Left cardiac atrium (tissue), 4 donors: ENCODE measurements at regions of chr15 and their contacts with region 1.

Region 1: GRCh38 chr15:81286621-81287121 is 37.3 kb downstream of the STARD5 start:
- DNase-seq: no peak
- ATAC-seq: peak; percentile 34

Region 2: DNA sequence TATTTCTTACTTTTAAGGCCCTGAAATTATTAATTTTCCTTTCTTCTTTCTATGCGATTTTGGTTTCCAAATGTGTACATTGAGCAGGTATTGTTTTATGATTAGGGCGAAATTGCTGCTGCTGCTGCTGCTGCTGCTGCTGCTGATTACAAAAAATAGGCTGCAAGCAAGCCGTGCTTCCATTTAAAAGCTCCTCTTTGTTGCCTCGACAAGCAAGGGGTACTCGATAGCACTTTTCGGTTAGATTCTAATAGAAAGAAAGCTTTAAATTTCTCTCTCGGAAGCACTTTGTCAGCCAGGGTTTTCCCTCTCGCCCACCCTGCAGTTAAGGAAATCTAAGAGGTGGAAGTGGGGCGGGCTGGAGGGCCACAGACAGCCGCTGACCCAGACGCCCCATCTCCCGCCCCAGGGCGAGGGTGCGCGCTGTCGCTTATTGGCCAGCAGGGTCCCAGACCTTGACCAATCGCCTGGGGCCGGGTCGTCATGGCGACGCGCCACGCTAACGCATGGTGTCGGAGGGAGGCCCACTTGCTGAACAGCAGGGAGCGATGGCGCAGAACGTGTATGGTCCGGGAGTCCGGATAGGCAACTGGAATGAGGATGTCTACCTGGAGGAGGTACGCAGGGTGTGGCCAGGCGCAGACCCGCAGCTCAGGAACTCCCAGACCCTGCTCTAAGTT is 152.7 kb before region 1 on chr15 and contains the start of gene CFAP161:
- intact Hi-C with region 1: no loop called
- DNase-seq: peak; percentile 91
- ATAC-seq: peak; percentile 98 to 100
- total RNA-seq, gene CFAP161: 0.41 to 0.52 TPM

Region 3: GRCh38 chr15:81336568-81336967 is 49.9 kb after region 1 on chr15:
- intact Hi-C with region 1: loop called in 1 of 2 experiments (anchors 10 kb)
- DNase-seq: no peak
- ATAC-seq: no peak